Activated B cell treated with CpG ODN at 0.5 μM for 24 hours (primary cell): ENCODE measurements at regions of chr7 and their contacts with region 1.

Region 1: GRCh38 chr7:50304158-50304910 is at the start of gene IKZF1:
- DNase-seq: peak; percentile 72
- ATAC-seq: peak; percentile 44
- H3K4me3 Mint-ChIP-seq: peak within 1 kb of the TSS; percentile 100
- H3K27ac Mint-ChIP-seq: peak within 1 kb of the TSS; percentile 96
- H3K4me1 Mint-ChIP-seq: peaks cover 53% of the 10 kb centered on the region
- H3K27me3 Mint-ChIP-seq: no peaks in the 10 kb centered on the region
- CTCF ChIP-seq: no peak
- total RNA-seq, gene IKZF1: 301 and 325 TPM in 2 replicates

Region 2: GRCh38 chr7:50092579-50093491 is 211.5 kb before region 1 on chr7 and contains the start of gene ZPBP:
- CTCF ChIA-PET with region 1: no interaction called
- POLR2A ChIA-PET with region 1: no interaction called
- intact Hi-C with region 1: loop called (anchors 1 kb)
- DNase-seq: peak; percentile 40
- ATAC-seq: peak; percentile 79
- H3K4me3 Mint-ChIP-seq: peak within 1 kb of the TSS; percentile 88
- H3K27ac Mint-ChIP-seq: peak within 1 kb of the TSS; percentile 81
- H3K4me1 Mint-ChIP-seq: peaks cover 8% of the 10 kb centered on the region
- H3K27me3 Mint-ChIP-seq: peaks cover 2% of the 10 kb centered on the region
- CTCF ChIP-seq: peak; percentile 61
- total RNA-seq, gene ZPBP: not detected in 2 replicates

Region 3: DNA sequence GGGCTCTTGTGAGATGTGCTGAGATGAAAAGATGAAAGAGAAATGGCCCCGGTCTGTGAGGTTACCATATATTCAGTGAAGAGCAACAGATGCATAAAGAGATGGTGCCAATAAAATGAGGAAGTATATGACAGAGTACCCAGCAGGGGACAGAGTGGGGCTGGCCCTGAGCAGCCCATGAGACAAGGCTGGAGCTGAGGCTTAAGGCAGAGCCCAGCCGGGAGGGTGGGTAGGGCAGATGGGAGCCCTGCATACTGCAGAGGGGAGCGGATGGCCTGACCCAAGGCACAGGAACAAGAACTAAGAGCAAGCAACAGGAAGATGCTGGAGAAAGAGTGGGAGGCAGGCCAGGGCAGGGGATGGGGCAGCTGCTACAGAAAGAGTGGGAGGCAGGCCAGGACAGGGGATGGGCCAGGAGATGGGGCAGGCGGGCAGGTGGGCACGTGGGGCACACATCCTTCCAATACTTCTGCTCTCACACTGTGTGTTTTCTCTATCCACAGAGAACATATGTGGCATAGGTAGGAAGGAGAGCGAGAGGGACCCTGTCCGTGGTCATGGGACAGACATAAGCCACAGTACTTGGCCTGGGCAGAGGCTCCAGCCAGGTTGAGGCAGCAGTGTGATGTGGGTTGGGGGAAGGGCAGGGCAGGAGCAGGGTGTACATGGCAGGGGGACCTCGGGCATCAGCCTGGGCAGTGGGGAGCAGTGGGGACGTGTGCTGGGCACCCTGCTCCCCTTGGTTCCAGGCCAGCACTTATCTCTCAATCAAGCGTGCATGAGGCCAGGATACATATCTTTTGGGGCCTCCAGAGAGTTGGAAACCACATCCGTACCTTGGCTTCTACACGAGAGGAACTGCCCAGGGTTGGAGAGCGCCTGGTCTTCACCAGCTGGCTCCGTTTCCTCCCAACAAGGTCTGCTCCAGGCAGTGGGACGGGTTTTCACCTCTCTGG is 91.4 kb before region 1 on chr7:
- CTCF ChIA-PET with region 1: interaction called, 3 read pairs
- POLR2A ChIA-PET with region 1: interaction called, 20 read pairs
- intact Hi-C with region 1: loop called (anchors 1 kb)
- DNase-seq: no peak
- ATAC-seq: peak; percentile 91
- H3K4me3 Mint-ChIP-seq: peak overlapping the region; percentile 70
- H3K27ac Mint-ChIP-seq: peak overlapping the region; percentile 84
- H3K4me1 Mint-ChIP-seq: peaks cover 63% of the 10 kb centered on the region
- H3K27me3 Mint-ChIP-seq: no peaks in the 10 kb centered on the region
- CTCF ChIP-seq: no peak

Region 4: GRCh38 chr7:50281680-50282445 is 22.5 kb before region 1 on chr7:
- CTCF ChIA-PET with region 1: interaction called, 4 read pairs
- POLR2A ChIA-PET with region 1: interaction called, 257 read pairs
- intact Hi-C with region 1: loop called (anchors 1 kb)
- DNase-seq: no peak
- ATAC-seq: peak; percentile 89
- H3K4me3 Mint-ChIP-seq: peak overlapping the region; percentile 84
- H3K27ac Mint-ChIP-seq: peak overlapping the region; percentile 94
- H3K4me1 Mint-ChIP-seq: peaks cover 83% of the 10 kb centered on the region
- H3K27me3 Mint-ChIP-seq: no peaks in the 10 kb centered on the region
- CTCF ChIP-seq: no peak

Region 5: GRCh38 chr7:50317221-50317678 is 12.9 kb after region 1 on chr7:
- CTCF ChIA-PET with region 1: interaction called, 9 read pairs
- POLR2A ChIA-PET with region 1: interaction called, 101 read pairs
- intact Hi-C with region 1: loop called (anchors 1 kb)
- DNase-seq: no peak
- ATAC-seq: peak; percentile 63
- H3K4me3 Mint-ChIP-seq: peak overlapping the region; percentile 74
- H3K27ac Mint-ChIP-seq: peak overlapping the region; percentile 96
- H3K4me1 Mint-ChIP-seq: peaks cover 96% of the 10 kb centered on the region
- H3K27me3 Mint-ChIP-seq: no peaks in the 10 kb centered on the region
- CTCF ChIP-seq: no peak

Region 6: GRCh38 chr7:50349963-50350944 is 45.9 kb after region 1 on chr7:
- CTCF ChIA-PET with region 1: interaction called, 7 read pairs
- POLR2A ChIA-PET with region 1: interaction called, 182 read pairs
- intact Hi-C with region 1: loop called (anchors 1 kb)
- DNase-seq: no peak
- ATAC-seq: peak; percentile 76
- H3K4me3 Mint-ChIP-seq: peak overlapping the region; percentile 42
- H3K27ac Mint-ChIP-seq: peak overlapping the region; percentile 88
- H3K4me1 Mint-ChIP-seq: peaks cover 95% of the 10 kb centered on the region
- H3K27me3 Mint-ChIP-seq: no peaks in the 10 kb centered on the region
- CTCF ChIP-seq: no peak

Region 7: DNA sequence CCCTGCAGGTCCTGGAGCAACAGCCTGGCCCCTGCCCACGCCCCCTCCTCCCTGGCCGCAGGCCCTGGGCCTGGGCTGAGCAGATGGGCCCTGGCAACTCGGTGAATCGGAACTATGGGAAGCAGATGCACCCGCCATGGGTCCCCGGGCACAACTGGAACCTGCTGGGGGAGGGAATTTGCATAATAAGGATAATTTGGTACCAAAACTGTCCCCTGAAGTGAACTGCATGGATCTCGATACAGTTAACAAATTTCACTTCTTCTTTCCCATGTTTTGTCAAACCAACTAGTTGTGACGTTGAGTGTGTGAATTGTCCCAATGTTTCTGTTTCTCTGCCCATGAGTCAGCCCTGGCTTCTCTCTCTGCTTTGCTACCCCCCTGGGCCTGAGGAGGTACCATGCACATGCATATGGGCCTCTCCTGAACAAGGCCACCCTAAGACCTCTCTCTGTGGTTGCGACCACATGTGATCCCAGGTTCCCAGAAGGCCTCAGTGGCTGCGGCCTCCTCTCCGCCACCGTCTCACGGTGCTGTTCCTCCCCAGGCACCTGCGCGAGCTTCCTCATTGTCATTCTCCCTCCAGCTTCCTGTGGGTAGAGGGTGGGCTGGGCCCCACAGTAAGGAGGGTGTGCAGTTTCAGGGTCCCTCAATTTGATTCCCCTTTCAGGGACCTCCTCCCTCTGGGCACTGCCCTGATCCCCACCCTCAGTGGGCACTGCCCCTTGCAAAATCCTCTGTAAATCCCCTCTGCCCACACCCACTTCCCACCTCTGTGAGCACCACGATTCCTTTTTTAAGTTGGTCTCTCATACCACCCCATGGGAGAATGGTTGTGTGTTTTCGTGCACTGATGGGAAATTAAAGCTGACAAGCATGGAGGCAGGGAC is 105.8 kb after region 1 on chr7:
- CTCF ChIA-PET with region 1: no interaction called
- POLR2A ChIA-PET with region 1: interaction called, 7 read pairs
- intact Hi-C with region 1: loop called (anchors 2 kb)
- DNase-seq: peak; percentile 58
- ATAC-seq: peak; percentile 70
- H3K4me3 Mint-ChIP-seq: peak overlapping the region; percentile 56
- H3K27ac Mint-ChIP-seq: peak overlapping the region; percentile 94
- H3K4me1 Mint-ChIP-seq: peaks cover 98% of the 10 kb centered on the region
- H3K27me3 Mint-ChIP-seq: no peaks in the 10 kb centered on the region
- CTCF ChIP-seq: no peak